CD14-positive monocyte (primary cell): ENCODE measurements at regions of chr12 and their contacts with region 1.

Region 1: DNA sequence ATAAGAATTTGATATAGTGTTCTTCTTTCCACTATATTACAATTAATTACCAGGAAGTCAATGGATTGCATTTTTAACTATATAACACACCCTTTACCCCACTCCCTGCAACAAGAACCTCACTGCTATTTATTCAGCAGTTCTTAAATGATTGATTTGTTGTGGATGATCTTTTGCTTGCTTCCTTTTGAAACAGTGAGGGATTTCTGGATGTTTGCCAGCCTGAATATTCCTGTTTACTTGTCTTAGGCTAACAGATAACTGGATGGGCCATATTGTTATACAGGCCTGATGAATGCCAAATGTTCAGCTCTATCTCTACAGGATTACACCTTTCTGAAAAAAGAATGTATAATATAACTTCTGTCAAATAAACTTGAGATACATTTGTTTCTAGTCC is 497.6 kb downstream of the APAF1 start:
- DNase-seq: no peak
- H3K4me3 ChIP-seq: no peak overlapping the region
- H3K4me3 Mint-ChIP-seq: no peak overlapping the region
- H3K27ac ChIP-seq: no peak overlapping the region
- H3K27ac Mint-ChIP-seq: no peak overlapping the region
- H3K4me1 ChIP-seq: peaks cover 44% of the 10 kb centered on the region in 2 donors
- H3K4me1 Mint-ChIP-seq: peaks cover 28% of the 10 kb centered on the region
- H3K27me3 ChIP-seq: no peaks in the 10 kb centered on the region
- H3K27me3 Mint-ChIP-seq: peaks cover 3 to 7% (median 3%) of the 10 kb centered on the region in 3 donors
- CTCF ChIP-seq: no peak

Region 2: GRCh38 chr12:99154216-99154982 is 11.7 kb after region 1 on chr12:
- intact Hi-C with region 1: no loop called
- DNase-seq: no peak
- H3K4me3 ChIP-seq: no peak overlapping the region
- H3K4me3 Mint-ChIP-seq: peak overlapping the region in 1 of 2 donors; percentile 18
- H3K27ac ChIP-seq: no peak overlapping the region
- H3K27ac Mint-ChIP-seq: peak overlapping the region in 1 of 7 donors; percentile 18
- H3K4me1 ChIP-seq: no peaks in the 10 kb centered on the region
- H3K4me1 Mint-ChIP-seq: peaks cover 4% of the 10 kb centered on the region
- H3K27me3 ChIP-seq: peaks cover 13 to 22% of the 10 kb centered on the region in 2 donors
- H3K27me3 Mint-ChIP-seq: peaks cover 12 to 40% (median 18%) of the 10 kb centered on the region in 3 donors
- CTCF ChIP-seq: no peak

Region 3: GRCh38 chr12:100624571-100624970 is 1481.9 kb after region 1 on chr12:
- intact Hi-C with region 1: loop called in 1 of 2 experiments (anchors 5 kb)
- DNase-seq: no peak
- H3K4me3 ChIP-seq: no peak overlapping the region
- H3K4me3 Mint-ChIP-seq: no peak overlapping the region
- H3K27ac ChIP-seq: no peak overlapping the region
- H3K27ac Mint-ChIP-seq: peak overlapping the region in 1 of 7 donors; percentile 69
- H3K4me1 ChIP-seq: no peaks in the 10 kb centered on the region
- H3K4me1 Mint-ChIP-seq: no peaks in the 10 kb centered on the region
- H3K27me3 ChIP-seq: no peaks in the 10 kb centered on the region
- H3K27me3 Mint-ChIP-seq: no peaks in the 10 kb centered on the region
- CTCF ChIP-seq: no peak